Calu3 (cell line): ENCODE measurements at regions of chr2 and their contacts with region 1.

Region 1: DNA sequence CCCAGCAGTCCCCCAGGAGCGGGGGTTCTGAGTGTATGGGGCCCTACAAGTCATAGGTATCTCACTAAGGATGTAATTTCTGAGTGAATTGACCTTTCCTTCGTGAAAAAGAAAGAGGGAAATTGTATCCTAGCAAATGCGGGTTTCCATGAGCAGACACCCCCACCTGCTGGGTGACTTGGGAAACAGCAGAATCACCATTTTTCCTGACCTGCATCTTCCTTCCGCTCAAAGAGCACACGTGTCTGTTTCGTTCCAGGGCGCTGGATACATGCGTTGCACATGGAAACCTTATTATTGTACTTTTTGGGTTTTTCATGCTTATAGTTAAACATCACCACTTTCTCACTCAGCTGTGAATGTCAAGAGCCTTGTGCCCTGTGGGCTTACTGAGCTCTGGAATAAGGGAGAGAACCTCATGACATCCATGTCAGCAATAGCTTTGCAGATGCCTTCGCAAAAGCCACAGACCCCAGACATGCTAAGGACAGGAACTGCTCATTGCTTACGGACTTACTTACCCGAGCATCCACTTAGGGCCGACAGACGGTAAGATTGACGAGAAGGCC is 132.8 kb downstream of the TPO start:
- DNase-seq: peak; percentile 59
- H3K4me3 Mint-ChIP-seq: no peak overlapping the region
- H3K27ac Mint-ChIP-seq: no peak overlapping the region
- H3K4me1 Mint-ChIP-seq: no peaks in the 10 kb centered on the region
- H3K27me3 Mint-ChIP-seq: no peaks in the 10 kb centered on the region
- CTCF ChIP-seq: peak; percentile 35

Region 2: GRCh38 chr2:246489-247144 is 1299.5 kb before region 1 on chr2:
- CTCF ChIA-PET with region 1: no interaction called
- intact Hi-C with region 1: loop called (anchors 10 kb)
- DNase-seq: peak; percentile 55
- H3K4me3 Mint-ChIP-seq: no peak overlapping the region
- H3K27ac Mint-ChIP-seq: no peak overlapping the region
- H3K4me1 Mint-ChIP-seq: peaks cover 8% of the 10 kb centered on the region
- H3K27me3 Mint-ChIP-seq: no peaks in the 10 kb centered on the region
- CTCF ChIP-seq: peak; percentile 74

Region 3: GRCh38 chr2:529425-529824 is 1016.7 kb before region 1 on chr2:
- CTCF ChIA-PET with region 1: interaction called, 3 read pairs
- intact Hi-C with region 1: loop called (anchors 2 kb)
- DNase-seq: peak; percentile 34
- H3K4me3 Mint-ChIP-seq: no peak overlapping the region
- H3K27ac Mint-ChIP-seq: peak overlapping the region; percentile 4
- H3K4me1 Mint-ChIP-seq: no peaks in the 10 kb centered on the region
- H3K27me3 Mint-ChIP-seq: no peaks in the 10 kb centered on the region
- CTCF ChIP-seq: peak; percentile 54

Region 4: DNA sequence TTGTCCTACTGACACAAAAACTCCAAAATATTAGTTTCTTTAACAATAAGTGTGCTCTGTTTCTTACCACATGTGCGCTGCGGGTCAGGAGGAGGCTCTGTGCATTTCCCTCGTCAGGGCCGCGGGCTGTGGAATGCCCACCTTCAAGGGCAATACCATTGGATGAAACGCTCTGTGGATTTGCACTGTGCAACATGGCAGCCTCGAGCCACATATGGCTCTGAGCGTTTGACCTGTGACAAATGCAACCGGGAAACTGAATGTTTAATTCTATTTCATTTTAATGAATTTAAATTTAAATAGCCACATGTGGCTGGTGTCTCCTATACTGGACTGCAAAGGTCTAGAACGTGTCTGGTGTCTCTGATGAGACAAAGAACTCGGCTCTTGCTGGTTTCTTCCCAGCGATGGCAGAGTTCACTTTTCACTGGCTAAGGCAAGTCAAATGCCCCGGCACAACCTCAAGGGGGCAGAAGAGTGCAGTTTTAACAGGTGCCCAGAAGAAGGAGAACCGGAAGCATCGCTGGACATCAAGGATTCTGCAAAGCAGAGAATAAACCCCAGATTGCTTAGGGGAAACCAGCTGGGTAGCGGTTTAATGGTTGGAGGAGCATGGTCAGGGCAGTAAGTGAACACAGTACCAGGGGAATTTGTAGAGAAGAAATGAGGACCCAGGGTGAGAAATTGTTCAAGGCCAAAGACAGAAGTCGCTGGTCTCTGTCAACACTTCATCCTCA is 831.9 kb before region 1 on chr2:
- CTCF ChIA-PET with region 1: interaction called, 3 read pairs
- intact Hi-C with region 1: loop called (anchors 10 kb)
- DNase-seq: peak; percentile 49
- H3K4me3 Mint-ChIP-seq: no peak overlapping the region
- H3K27ac Mint-ChIP-seq: no peak overlapping the region
- H3K4me1 Mint-ChIP-seq: no peaks in the 10 kb centered on the region
- H3K27me3 Mint-ChIP-seq: peaks cover 17% of the 10 kb centered on the region
- CTCF ChIP-seq: peak; percentile 17

Region 5: DNA sequence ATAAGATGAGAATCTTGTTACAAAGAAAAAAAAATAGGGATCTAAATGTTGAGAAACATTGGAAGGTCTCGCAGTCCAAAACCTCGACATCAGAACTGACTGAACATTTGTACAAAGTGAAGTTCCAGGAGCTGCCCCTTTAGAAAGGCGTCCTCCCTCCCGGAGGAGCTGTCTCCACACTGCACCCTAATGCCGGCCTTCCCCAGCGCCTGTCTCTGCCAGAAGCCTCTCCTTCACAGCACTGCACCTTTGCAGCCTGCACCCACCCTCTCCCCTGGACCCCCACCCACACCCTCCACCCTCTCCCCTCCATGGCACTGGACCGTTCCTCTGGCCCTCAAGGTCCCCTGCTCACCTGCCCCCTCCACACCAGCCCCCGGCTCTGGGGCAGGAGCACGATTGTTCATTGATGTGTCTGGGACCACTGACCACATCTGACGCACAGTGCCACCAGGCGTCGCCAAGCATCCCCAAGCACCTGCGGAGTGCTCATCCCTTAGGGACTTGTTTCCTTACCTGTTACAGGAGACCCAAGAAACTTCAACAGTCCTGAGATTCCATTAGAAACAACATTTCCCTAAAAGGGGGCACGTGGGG is 685.8 kb before region 1 on chr2:
- CTCF ChIA-PET with region 1: no interaction called
- intact Hi-C with region 1: loop called (anchors 5 kb)
- DNase-seq: peak; percentile 36
- H3K4me3 Mint-ChIP-seq: no peak overlapping the region
- H3K27ac Mint-ChIP-seq: no peak overlapping the region
- H3K4me1 Mint-ChIP-seq: no peaks in the 10 kb centered on the region
- H3K27me3 Mint-ChIP-seq: no peaks in the 10 kb centered on the region
- CTCF ChIP-seq: no peak

Region 6: GRCh38 chr2:1162768-1163584 is 383.1 kb before region 1 on chr2:
- CTCF ChIA-PET with region 1: no interaction called
- intact Hi-C with region 1: no loop called
- DNase-seq: no peak
- H3K4me3 Mint-ChIP-seq: no peak overlapping the region
- H3K27ac Mint-ChIP-seq: no peak overlapping the region
- H3K4me1 Mint-ChIP-seq: no peaks in the 10 kb centered on the region
- H3K27me3 Mint-ChIP-seq: no peaks in the 10 kb centered on the region
- CTCF ChIP-seq: no peak

Region 7: GRCh38 chr2:1394709-1395408 is 151.2 kb before region 1 on chr2:
- CTCF ChIA-PET with region 1: no interaction called
- intact Hi-C with region 1: no loop called
- DNase-seq: no peak
- H3K4me3 Mint-ChIP-seq: no peak overlapping the region
- H3K27ac Mint-ChIP-seq: no peak overlapping the region
- H3K4me1 Mint-ChIP-seq: no peaks in the 10 kb centered on the region
- H3K27me3 Mint-ChIP-seq: no peaks in the 10 kb centered on the region
- CTCF ChIP-seq: no peak

Region 8: GRCh38 chr2:1591978-1592907 is 46.1 kb after region 1 on chr2:
- CTCF ChIA-PET with region 1: no interaction called
- intact Hi-C with region 1: no loop called
- DNase-seq: no peak
- H3K4me3 Mint-ChIP-seq: no peak overlapping the region
- H3K27ac Mint-ChIP-seq: no peak overlapping the region
- H3K4me1 Mint-ChIP-seq: no peaks in the 10 kb centered on the region
- H3K27me3 Mint-ChIP-seq: no peaks in the 10 kb centered on the region
- CTCF ChIP-seq: no peak

Region 9: DNA sequence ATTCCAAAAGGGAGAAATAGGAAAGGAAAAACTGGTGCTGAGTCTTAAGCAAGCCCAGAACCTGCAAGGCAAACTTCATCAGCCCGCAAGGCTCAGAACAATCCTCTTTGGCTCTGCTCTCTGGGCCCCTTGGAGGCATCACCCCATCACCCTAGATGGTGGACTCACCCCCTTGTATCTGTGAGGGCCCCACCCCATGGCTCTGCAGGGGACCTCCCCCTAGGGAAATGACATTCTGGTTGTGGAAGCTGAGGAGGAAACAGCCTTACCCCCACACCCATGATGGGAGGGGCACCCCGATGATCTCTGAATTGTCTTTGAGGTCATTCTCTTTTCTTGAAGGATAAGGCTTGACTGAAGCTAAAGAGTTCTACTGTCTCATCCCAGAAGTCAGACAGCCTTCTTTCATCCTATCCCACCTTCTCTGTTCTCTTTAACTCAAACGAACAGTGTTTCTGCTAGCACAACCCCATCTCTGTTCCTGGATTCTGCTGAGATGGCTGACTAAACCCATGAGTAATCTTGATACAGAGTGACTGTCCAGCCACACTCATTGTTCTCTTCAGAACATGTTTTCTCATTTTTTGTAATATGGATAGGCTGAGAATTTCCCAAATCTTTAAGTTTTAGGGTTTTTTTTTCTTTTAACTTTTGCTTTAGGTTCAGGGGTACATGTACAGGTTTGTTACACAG is 1277.1 kb after region 1 on chr2:
- CTCF ChIA-PET with region 1: interaction called, 10 read pairs
- intact Hi-C with region 1: no loop called
- DNase-seq: no peak
- H3K4me3 Mint-ChIP-seq: no peak overlapping the region
- H3K27ac Mint-ChIP-seq: no peak overlapping the region
- H3K4me1 Mint-ChIP-seq: no peaks in the 10 kb centered on the region
- H3K27me3 Mint-ChIP-seq: no peaks in the 10 kb centered on the region
- CTCF ChIP-seq: no peak